GM23248 (cell line): ENCODE measurements at regions of chr6 and their contacts with region 1.

Region 1: DNA sequence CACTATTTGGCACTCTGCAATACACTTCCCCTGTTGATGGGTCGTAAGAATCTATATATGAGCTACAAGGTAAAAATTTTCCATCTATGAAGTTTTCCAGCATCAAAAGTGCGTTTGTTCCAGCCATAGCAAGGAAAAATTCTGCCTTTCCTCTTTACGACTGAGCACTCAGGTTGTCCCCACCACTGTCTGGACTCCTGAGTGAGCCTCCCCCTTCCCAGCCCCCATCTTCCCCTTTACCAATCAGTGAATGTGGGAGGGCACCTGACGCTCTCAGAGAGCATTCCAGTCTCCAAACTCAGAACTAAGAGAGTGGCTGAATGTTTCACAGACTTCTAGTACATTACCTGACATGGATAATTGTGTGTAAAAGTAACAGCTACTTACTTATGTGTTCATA is at the start of gene ALDH8A1:
- DNase-seq: no peak
- H3K4me3 ChIP-seq: no peak within 1 kb of the TSS
- H3K27ac ChIP-seq: no peak within 1 kb of the TSS
- H3K4me1 ChIP-seq: no peaks in the 10 kb centered on the region
- H3K27me3 ChIP-seq: no peaks in the 10 kb centered on the region
- total RNA-seq, gene ALDH8A1: not detected in 2 replicates

Region 2: GRCh38 chr6:134152767-134153485 is 797.0 kb before region 1 on chr6:
- in situ Hi-C with region 1: loop called (anchors 10 kb)
- DNase-seq: no peak
- H3K4me3 ChIP-seq: no peak overlapping the region
- H3K27ac ChIP-seq: no peak overlapping the region
- H3K4me1 ChIP-seq: no peaks in the 10 kb centered on the region
- H3K27me3 ChIP-seq: no peaks in the 10 kb centered on the region